Heart right ventricle (tissue), 16 donors: ENCODE measurements at regions of chr6 and their contacts with region 1.

Region 1: GRCh38 chr6:32153564-32154513 is at the start of gene PPT2:
- DNase-seq: peak; percentile 90 to 95
- ATAC-seq: peak; percentile 90 to 96 (median 94)
- H3K4me3 ChIP-seq: peak within 1 kb of the TSS; percentile 58 to 91 (median 80)
- H3K27ac ChIP-seq: peak within 1 kb of the TSS; percentile 60 to 96 (median 91)
- H3K4me1 ChIP-seq: peaks cover 6 to 48% (median 30%) of the 10 kb centered on the region in 9 donors
- H3K27me3 ChIP-seq: peaks cover 0 to 57% (median 8%) of the 10 kb centered on the region in 7 donors
- CTCF ChIP-seq: peak in 5 of 9 donors; percentile 15 to 42 (median 30)
- total RNA-seq, gene PPT2: 18.0 to 31.8 (median 23.7) TPM

Region 2: DNA sequence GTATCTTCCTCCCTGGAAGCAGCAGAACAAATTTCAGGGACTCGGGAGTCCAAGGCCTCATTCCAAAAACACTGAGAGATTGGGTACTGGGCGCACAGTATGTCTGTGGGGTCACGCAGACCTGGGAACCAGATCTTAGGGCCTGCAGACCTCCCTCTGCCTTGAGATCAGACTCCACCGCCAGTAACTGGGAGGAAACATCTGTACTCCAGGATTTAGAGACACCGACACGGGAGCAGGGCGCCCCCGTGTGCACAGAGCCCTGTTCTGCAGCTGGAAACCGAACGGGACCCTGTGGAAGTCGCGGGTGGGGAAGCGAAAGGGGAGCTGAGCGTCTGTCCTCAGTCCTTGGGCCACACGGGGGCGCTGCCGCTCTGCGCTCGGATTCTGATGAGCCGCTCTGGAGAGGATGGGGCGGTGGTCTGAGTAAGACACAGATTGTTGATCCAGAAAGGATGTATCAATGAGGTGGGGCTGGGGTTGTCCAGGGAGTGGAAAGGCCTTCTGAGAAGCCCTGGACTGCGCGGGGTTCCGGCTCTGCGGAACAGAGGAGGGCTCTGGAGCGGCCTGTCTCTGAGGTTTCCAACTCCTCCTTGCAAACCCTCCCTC is 1700.2 kb before region 1 on chr6:
- intact Hi-C with region 1: no loop called
- DNase-seq: peak; percentile 74 to 82
- ATAC-seq: peak; percentile 56 to 90 (median 81)
- H3K4me3 ChIP-seq: no peak overlapping the region
- H3K27ac ChIP-seq: no peak overlapping the region
- H3K4me1 ChIP-seq: peaks cover 0 to 33% (median 12%) of the 10 kb centered on the region in 9 donors
- H3K27me3 ChIP-seq: peaks cover 4 to 98% (median 95%) of the 10 kb centered on the region in 7 donors
- CTCF ChIP-seq: peak; percentile 46 to 89 (median 73)

Region 3: GRCh38 chr6:32118782-32119628 is 34.8 kb before region 1 on chr6:
- intact Hi-C with region 1: loop called in 5 of 10 experiments (anchors 5 kb)
- DNase-seq: peak; percentile 86 to 88
- ATAC-seq: peak; percentile 73 to 88 (median 80)
- H3K4me3 ChIP-seq: no peak overlapping the region
- H3K27ac ChIP-seq: peak overlapping the region in 9 of 10 donors; percentile 3 to 68 (median 51)
- H3K4me1 ChIP-seq: peaks cover 7 to 34% (median 20%) of the 10 kb centered on the region in 9 donors
- H3K27me3 ChIP-seq: no peaks in the 10 kb centered on the region
- CTCF ChIP-seq: peak; percentile 80 to 97 (median 94)

Region 4: GRCh38 chr6:32177788-32178546 is 24.1 kb after region 1 on chr6 and contains the start of gene RNF5:
- intact Hi-C with region 1: loop called in 2 of 10 experiments (anchors 1 to 2 kb)
- DNase-seq: peak; percentile 87 to 99
- ATAC-seq: peak; percentile 82 to 89 (median 86)
- H3K4me3 ChIP-seq: peak within 1 kb of the TSS; percentile 56 to 93 (median 86)
- H3K27ac ChIP-seq: peak within 1 kb of the TSS; percentile 93 to 98 (median 94)
- H3K4me1 ChIP-seq: peaks cover 8 to 84% (median 55%) of the 10 kb centered on the region in 9 donors
- H3K27me3 ChIP-seq: no peaks in the 10 kb centered on the region
- CTCF ChIP-seq: no peak
- total RNA-seq, gene RNF5: 75.5 to 122 (median 82.7) TPM